CD8-positive, alpha-beta T cell (primary cell): ENCODE measurements at regions of chr6 and their contacts with region 1.

Region 1: GRCh38 chr6:142819603-142820337 is 125.2 kb downstream of the HIVEP2 start:
- DNase-seq: peak in 5 of 9 experiments; percentile 29 to 86 (median 47)
- ATAC-seq: peak; percentile 57
- H3K4me3 ChIP-seq: peak overlapping the region; percentile 31 to 48
- H3K4me3 Mint-ChIP-seq: peak overlapping the region; percentile 90
- H3K27ac ChIP-seq: peak overlapping the region; percentile 30 to 78
- H3K27ac Mint-ChIP-seq: peak overlapping the region; percentile 96
- H3K4me1 ChIP-seq: peaks cover 44% of the 10 kb centered on the region
- H3K4me1 Mint-ChIP-seq: peaks cover 76% of the 10 kb centered on the region
- H3K27me3 ChIP-seq: no peaks in the 10 kb centered on the region
- H3K27me3 Mint-ChIP-seq: no peaks in the 10 kb centered on the region
- CTCF ChIP-seq: no peak

Region 2: GRCh38 chr6:142784344-142784743 is 35.4 kb before region 1 on chr6:
- CTCF ChIA-PET with region 1: interaction called, 3 read pairs
- POLR2A ChIA-PET with region 1: interaction called, 3 read pairs
- intact Hi-C with region 1: loop called in 1 of 2 experiments (anchors 5 kb)
- DNase-seq: peak in 4 of 9 experiments; percentile 14 to 55 (median 25)
- ATAC-seq: peak; percentile 86
- H3K4me3 ChIP-seq: no peak overlapping the region
- H3K4me3 Mint-ChIP-seq: no peak overlapping the region
- H3K27ac ChIP-seq: no peak overlapping the region
- H3K27ac Mint-ChIP-seq: peak overlapping the region; percentile 76
- H3K4me1 ChIP-seq: peaks cover 23% of the 10 kb centered on the region
- H3K4me1 Mint-ChIP-seq: peaks cover 63% of the 10 kb centered on the region
- H3K27me3 ChIP-seq: no peaks in the 10 kb centered on the region
- H3K27me3 Mint-ChIP-seq: no peaks in the 10 kb centered on the region
- CTCF ChIP-seq: no peak

Region 3: GRCh38 chr6:142802124-142802523 is 17.6 kb before region 1 on chr6:
- CTCF ChIA-PET with region 1: no interaction called
- POLR2A ChIA-PET with region 1: interaction called, 4 read pairs
- intact Hi-C with region 1: loop called in 1 of 2 experiments (anchors 2 kb)
- DNase-seq: peak in 1 of 9 experiments; percentile 38
- ATAC-seq: no peak
- H3K4me3 ChIP-seq: no peak overlapping the region
- H3K4me3 Mint-ChIP-seq: no peak overlapping the region
- H3K27ac ChIP-seq: no peak overlapping the region
- H3K27ac Mint-ChIP-seq: peak overlapping the region; percentile 15
- H3K4me1 ChIP-seq: peaks cover 26% of the 10 kb centered on the region
- H3K4me1 Mint-ChIP-seq: peaks cover 92% of the 10 kb centered on the region
- H3K27me3 ChIP-seq: no peaks in the 10 kb centered on the region
- H3K27me3 Mint-ChIP-seq: no peaks in the 10 kb centered on the region
- CTCF ChIP-seq: no peak

Region 4: DNA sequence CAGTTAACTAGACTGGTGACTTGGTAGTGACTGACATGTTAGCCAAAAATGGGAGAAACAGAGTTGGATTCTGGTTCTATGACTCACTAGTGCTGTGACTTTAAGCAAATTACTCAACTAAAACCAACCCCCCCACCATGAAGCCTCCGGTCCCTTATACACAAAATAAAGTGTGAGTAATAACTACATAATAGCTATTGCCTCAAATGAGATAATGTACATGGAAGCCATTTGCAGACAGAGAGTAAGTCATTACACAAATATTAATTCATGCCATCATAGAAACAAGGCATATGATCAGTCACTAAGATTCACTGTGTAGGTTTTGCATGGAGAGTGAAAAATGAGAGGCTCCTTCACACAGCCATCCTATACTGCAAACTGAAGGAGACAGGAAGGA is 13.3 kb after region 1 on chr6:
- CTCF ChIA-PET with region 1: interaction called, 7 read pairs
- POLR2A ChIA-PET with region 1: interaction called, 7 read pairs
- intact Hi-C with region 1: loop called (anchors 2 kb)
- DNase-seq: no peak
- ATAC-seq: peak; percentile 36
- H3K4me3 ChIP-seq: no peak overlapping the region
- H3K4me3 Mint-ChIP-seq: no peak overlapping the region
- H3K27ac ChIP-seq: no peak overlapping the region
- H3K27ac Mint-ChIP-seq: peak overlapping the region; percentile 62
- H3K4me1 ChIP-seq: peaks cover 22% of the 10 kb centered on the region
- H3K4me1 Mint-ChIP-seq: peaks cover 78% of the 10 kb centered on the region
- H3K27me3 ChIP-seq: no peaks in the 10 kb centered on the region
- H3K27me3 Mint-ChIP-seq: no peaks in the 10 kb centered on the region
- CTCF ChIP-seq: no peak

Region 5: GRCh38 chr6:142838821-142839685 is 19.3 kb after region 1 on chr6:
- CTCF ChIA-PET with region 1: interaction called, 7 read pairs
- POLR2A ChIA-PET with region 1: interaction called, 7 read pairs
- intact Hi-C with region 1: loop called (anchors 2 kb)
- DNase-seq: no peak
- ATAC-seq: no peak
- H3K4me3 ChIP-seq: no peak overlapping the region
- H3K4me3 Mint-ChIP-seq: peak overlapping the region; percentile 12
- H3K27ac ChIP-seq: no peak overlapping the region
- H3K27ac Mint-ChIP-seq: peak overlapping the region; percentile 65
- H3K4me1 ChIP-seq: peaks cover 57% of the 10 kb centered on the region
- H3K4me1 Mint-ChIP-seq: peaks cover 79% of the 10 kb centered on the region
- H3K27me3 ChIP-seq: no peaks in the 10 kb centered on the region
- H3K27me3 Mint-ChIP-seq: no peaks in the 10 kb centered on the region
- CTCF ChIP-seq: no peak

Region 6: GRCh38 chr6:142845624-142846458 is 26.1 kb after region 1 on chr6:
- CTCF ChIA-PET with region 1: interaction called, 4 read pairs
- POLR2A ChIA-PET with region 1: interaction called, 7 read pairs
- intact Hi-C with region 1: loop called in 1 of 2 experiments (anchors 2 kb)
- DNase-seq: peak in 8 of 9 experiments; percentile 42 to 84 (median 72)
- ATAC-seq: peak; percentile 43
- H3K4me3 ChIP-seq: peak overlapping the region; percentile 43 to 48
- H3K4me3 Mint-ChIP-seq: peak overlapping the region; percentile 87
- H3K27ac ChIP-seq: peak overlapping the region; percentile 66 to 82
- H3K27ac Mint-ChIP-seq: peak overlapping the region; percentile 97
- H3K4me1 ChIP-seq: peaks cover 80% of the 10 kb centered on the region
- H3K4me1 Mint-ChIP-seq: peaks cover 92% of the 10 kb centered on the region
- H3K27me3 ChIP-seq: no peaks in the 10 kb centered on the region
- H3K27me3 Mint-ChIP-seq: no peaks in the 10 kb centered on the region
- CTCF ChIP-seq: no peak

Region 7: DNA sequence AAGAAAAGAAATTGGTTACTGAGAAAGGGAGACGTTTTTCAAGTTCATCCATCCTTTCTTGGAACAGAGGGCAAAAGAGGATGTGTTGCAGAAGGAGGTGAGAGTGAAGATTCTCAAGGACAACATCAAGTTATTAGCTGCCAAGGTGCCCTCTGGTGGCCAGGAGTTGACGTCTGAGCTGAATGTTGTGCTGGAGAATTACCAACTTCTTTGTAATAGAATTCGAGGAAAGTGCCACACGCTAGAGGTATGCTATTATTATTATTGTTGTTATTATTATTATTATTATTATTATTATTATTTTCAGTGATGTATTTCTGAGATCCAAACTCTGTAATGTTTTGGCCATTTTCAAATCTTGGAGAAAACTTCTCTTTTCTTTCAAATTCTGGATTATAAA is 1662.4 kb after region 1 on chr6:
- CTCF ChIA-PET with region 1: no interaction called
- POLR2A ChIA-PET with region 1: no interaction called
- intact Hi-C with region 1: no loop called
- DNase-seq: peak; percentile 49 to 80 (median 75)
- ATAC-seq: peak; percentile 77
- H3K4me3 ChIP-seq: no peak overlapping the region
- H3K4me3 Mint-ChIP-seq: no peak overlapping the region
- H3K27ac ChIP-seq: no peak overlapping the region
- H3K27ac Mint-ChIP-seq: no peak overlapping the region
- H3K4me1 ChIP-seq: no peaks in the 10 kb centered on the region
- H3K4me1 Mint-ChIP-seq: peaks cover 3% of the 10 kb centered on the region
- H3K27me3 ChIP-seq: no peaks in the 10 kb centered on the region
- H3K27me3 Mint-ChIP-seq: no peaks in the 10 kb centered on the region
- CTCF ChIP-seq: peak; percentile 80